ENCODE measurements at regions of chr22 and their contacts with region 1.

Region 1: DNA sequence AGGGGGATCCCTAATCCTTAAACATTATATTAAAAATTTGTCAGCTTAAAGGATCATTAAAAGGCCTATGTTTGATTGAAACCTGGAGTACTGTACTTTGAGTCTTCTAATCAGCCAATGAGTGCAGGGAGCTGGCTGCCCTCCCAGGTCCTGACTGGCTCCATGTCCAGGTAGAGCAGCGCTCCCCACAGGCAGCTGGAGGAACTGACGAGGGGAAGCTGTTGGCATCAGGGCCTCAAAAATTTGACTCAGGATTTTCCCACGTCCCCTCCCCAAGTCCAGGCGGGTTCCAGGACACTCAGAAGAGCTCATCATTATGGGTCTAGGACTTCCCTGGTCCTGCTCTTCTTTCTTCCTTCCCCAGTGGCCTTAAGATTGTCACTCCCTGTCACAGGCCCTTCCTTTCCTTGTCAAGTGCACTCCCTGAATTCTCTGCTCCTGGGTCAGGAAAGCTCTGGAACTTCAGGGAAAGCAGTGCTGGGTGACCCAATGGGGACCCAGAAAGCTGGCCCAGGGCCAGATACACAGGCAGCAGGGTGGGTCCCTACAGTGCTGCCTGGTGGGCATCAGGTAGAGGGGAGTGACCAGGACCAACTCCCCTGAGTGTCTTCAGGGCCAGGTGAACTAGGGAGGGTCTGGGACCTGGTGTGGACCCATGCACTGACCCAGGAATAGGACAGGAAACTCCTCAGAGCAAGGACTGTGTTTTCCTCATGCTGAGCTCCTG is 65.5 kb downstream of the GGTLC2 start:
- DNase-seq: no peak
- ATAC-seq: no peak
- H3K4me3 ChIP-seq: no peak overlapping the region
- H3K27ac ChIP-seq: no peak overlapping the region
- H3K4me1 ChIP-seq: peaks cover 0 to 7% (median 0%) of the 10 kb centered on the region in 12 donors
- H3K27me3 ChIP-seq: peaks cover 0 to 18% (median 0%) of the 10 kb centered on the region in 9 donors
- CTCF ChIP-seq: no peak
- POLR2A ChIP-seq: no peak

Region 2: GRCh38 chr22:22767876-22768602 is 58.2 kb after region 1 on chr22:
- intact Hi-C with region 1: loop called in 3 of 10 experiments (anchors 2 to 5 kb)
- DNase-seq: no peak
- ATAC-seq: no peak
- H3K4me3 ChIP-seq: no peak overlapping the region
- H3K27ac ChIP-seq: no peak overlapping the region
- H3K4me1 ChIP-seq: no peaks in the 10 kb centered on the region
- H3K27me3 ChIP-seq: peaks cover 0 to 20% (median 0%) of the 10 kb centered on the region in 9 donors
- CTCF ChIP-seq: no peak
- POLR2A ChIP-seq: no peak

Measured in heart left ventricle (tissue), 16 donors.